A673 (cell line): ENCODE measurements at regions of chr7 and their contacts with region 1.

Region 1: DNA sequence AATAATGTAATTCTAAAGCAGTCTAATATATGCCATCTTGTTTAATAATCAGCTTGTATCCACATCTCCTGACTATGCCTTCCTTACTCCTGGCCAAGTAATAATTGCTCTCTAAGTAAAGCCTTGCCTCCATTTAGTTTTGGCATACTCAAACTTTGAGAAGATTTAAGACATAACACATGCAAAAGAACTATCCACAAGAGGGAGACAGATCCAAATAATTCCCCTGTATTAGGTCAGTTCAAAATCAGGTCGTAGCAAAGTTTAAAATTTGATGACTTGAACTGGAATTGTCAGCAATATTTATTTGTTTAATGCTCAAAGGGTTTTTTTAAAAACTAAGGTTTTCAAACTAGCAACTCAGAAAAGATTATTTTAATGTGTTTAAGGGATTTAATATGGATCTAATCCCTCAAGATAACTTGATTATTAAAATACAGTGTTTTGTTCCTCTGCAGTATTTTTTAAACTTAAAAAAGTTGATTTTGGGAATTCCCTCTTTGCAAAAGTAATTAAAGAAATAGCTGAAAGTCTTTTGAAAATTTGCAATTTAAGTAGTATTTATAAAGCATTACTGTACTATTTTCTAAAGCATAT is 95.3 kb downstream of the HDAC9 start:
- DNase-seq: peak; percentile 77
- H3K4me3 ChIP-seq: no peak overlapping the region
- H3K27ac ChIP-seq: peak overlapping the region; percentile 53
- H3K4me1 ChIP-seq: peaks cover 15% of the 10 kb centered on the region
- H3K27me3 ChIP-seq: no peaks in the 10 kb centered on the region
- CTCF ChIP-seq: peak; percentile 84

Region 2: GRCh38 chr7:18320971-18321567 is 269.8 kb before region 1 on chr7:
- CTCF ChIA-PET with region 1: no interaction called
- POLR2A ChIA-PET with region 1: no interaction called
- intact Hi-C with region 1: no loop called
- DNase-seq: peak; percentile 66
- H3K4me3 ChIP-seq: no peak overlapping the region
- H3K27ac ChIP-seq: no peak overlapping the region
- H3K4me1 ChIP-seq: no peaks in the 10 kb centered on the region
- H3K27me3 ChIP-seq: no peaks in the 10 kb centered on the region
- CTCF ChIP-seq: peak; percentile 67

Region 3: DNA sequence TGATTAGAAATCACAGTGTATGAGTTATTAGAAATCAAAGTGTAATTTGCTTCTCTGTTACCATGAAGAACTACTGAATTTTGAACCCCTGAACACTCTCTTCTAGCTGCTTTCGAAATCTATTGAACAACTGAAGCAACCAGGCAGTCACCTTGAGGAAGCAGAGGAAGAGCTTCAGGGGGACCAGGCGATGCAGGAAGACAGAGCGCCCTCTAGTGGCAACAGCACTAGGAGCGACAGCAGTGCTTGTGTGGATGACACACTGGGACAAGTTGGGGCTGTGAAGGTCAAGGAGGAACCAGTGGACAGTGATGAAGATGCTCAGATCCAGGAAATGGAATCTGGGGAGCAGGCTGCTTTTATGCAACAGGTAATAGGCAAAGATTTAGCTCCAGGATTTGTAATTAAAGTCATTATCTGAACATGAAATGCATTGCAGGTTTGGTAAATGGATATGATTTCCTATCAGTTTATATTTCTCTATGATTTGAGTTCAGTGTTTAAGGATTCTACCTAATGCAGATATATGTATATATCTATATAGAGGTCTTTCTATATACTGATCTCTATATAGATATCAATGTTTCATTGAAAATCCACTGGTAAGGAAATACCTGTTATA is 75.4 kb after region 1 on chr7:
- CTCF ChIA-PET with region 1: interaction called, 8 read pairs
- POLR2A ChIA-PET with region 1: no interaction called
- intact Hi-C with region 1: loop called (anchors 2 kb)
- DNase-seq: peak; percentile 87
- H3K4me3 ChIP-seq: no peak overlapping the region
- H3K27ac ChIP-seq: peak overlapping the region; percentile 73
- H3K4me1 ChIP-seq: peaks cover 42% of the 10 kb centered on the region
- H3K27me3 ChIP-seq: no peaks in the 10 kb centered on the region
- CTCF ChIP-seq: peak; percentile 99

Region 4: DNA sequence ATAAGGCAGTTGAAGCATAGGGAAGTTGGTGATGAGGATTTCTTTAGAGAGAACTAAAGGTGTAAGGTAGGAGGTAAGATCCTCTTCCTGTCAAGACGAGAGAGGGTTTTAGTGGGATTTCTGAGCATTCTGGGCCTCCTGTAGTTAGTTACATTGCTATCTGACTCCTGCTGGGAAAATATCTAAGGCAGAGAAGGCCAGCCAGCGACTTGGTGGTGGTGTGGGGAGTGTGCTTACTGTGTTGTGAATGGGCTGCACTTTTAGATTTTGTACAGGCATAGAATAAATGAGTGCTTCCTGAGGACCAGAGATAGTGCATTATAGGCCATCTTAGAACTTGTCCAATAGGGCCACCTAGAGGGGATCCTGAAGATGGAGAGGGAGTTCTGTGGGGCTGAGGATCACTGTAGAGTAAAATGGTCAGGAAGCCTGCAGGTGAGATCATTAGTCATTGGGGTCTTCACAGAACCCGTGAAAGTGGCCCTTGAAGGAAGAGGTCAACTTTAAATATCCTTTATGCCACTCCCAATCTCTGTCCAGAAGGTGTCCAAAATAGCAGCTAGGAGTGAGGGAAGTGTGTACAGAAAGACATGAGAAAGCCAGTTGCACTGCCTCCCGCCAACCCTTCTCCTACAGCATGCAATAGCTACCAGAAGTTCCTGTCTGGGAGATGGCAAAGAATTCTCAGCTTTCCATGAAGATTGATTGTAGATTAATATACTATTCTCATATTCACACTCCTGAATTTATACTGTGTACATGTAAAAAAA is 851.4 kb after region 1 on chr7:
- CTCF ChIA-PET with region 1: no interaction called
- POLR2A ChIA-PET with region 1: no interaction called
- intact Hi-C with region 1: loop called (anchors 5 kb)
- DNase-seq: peak; percentile 63
- H3K4me3 ChIP-seq: no peak overlapping the region
- H3K27ac ChIP-seq: no peak overlapping the region
- H3K4me1 ChIP-seq: no peaks in the 10 kb centered on the region
- H3K27me3 ChIP-seq: no peaks in the 10 kb centered on the region
- CTCF ChIP-seq: peak; percentile 65

Region 5: GRCh38 chr7:19665399-19666008 is 1074.7 kb after region 1 on chr7:
- CTCF ChIA-PET with region 1: no interaction called
- POLR2A ChIA-PET with region 1: no interaction called
- intact Hi-C with region 1: loop called (anchors 1 kb)
- DNase-seq: peak; percentile 52
- H3K4me3 ChIP-seq: no peak overlapping the region
- H3K27ac ChIP-seq: no peak overlapping the region
- H3K4me1 ChIP-seq: no peaks in the 10 kb centered on the region
- H3K27me3 ChIP-seq: peaks cover 10% of the 10 kb centered on the region
- CTCF ChIP-seq: peak; percentile 75